CD4-positive, alpha-beta memory T cell (primary cell): ENCODE measurements at regions of chrX and their contacts with region 1.

Region 1: GRCh38 chrX:49922291-49923241 is at the start of gene CLCN5:
- DNase-seq: peak; percentile 91 to 96 (median 95)
- H3K4me3 ChIP-seq: peak within 1 kb of the TSS; percentile 42 to 65
- H3K4me3 Mint-ChIP-seq: peak within 1 kb of the TSS; percentile 76 to 86 (median 80)
- H3K27ac ChIP-seq: peak within 1 kb of the TSS; percentile 32
- H3K27ac Mint-ChIP-seq: peak within 1 kb of the TSS; percentile 59 to 81 (median 70)
- H3K4me1 ChIP-seq: peaks cover 4% of the 10 kb centered on the region
- H3K4me1 Mint-ChIP-seq: peaks cover 5 to 12% (median 5%) of the 10 kb centered on the region in 4 donors
- H3K27me3 ChIP-seq: no peaks in the 10 kb centered on the region
- H3K27me3 Mint-ChIP-seq: no peaks in the 10 kb centered on the region
- total RNA-seq, gene CLCN5: 1.8 to 2.4 TPM

Region 2: GRCh38 chrX:49673394-49673793 is 249.2 kb before region 1 on chrX:
- CTCF ChIA-PET with region 1: no interaction called
- POLR2A ChIA-PET with region 1: no interaction called
- intact Hi-C with region 1: no loop called
- DNase-seq: no peak
- H3K4me3 ChIP-seq: no peak overlapping the region
- H3K4me3 Mint-ChIP-seq: no peak overlapping the region
- H3K27ac ChIP-seq: no peak overlapping the region
- H3K27ac Mint-ChIP-seq: no peak overlapping the region
- H3K4me1 ChIP-seq: no peaks in the 10 kb centered on the region
- H3K4me1 Mint-ChIP-seq: no peaks in the 10 kb centered on the region
- H3K27me3 ChIP-seq: no peaks in the 10 kb centered on the region
- H3K27me3 Mint-ChIP-seq: peaks cover 3 to 6% of the 10 kb centered on the region in 2 donors

Region 3: DNA sequence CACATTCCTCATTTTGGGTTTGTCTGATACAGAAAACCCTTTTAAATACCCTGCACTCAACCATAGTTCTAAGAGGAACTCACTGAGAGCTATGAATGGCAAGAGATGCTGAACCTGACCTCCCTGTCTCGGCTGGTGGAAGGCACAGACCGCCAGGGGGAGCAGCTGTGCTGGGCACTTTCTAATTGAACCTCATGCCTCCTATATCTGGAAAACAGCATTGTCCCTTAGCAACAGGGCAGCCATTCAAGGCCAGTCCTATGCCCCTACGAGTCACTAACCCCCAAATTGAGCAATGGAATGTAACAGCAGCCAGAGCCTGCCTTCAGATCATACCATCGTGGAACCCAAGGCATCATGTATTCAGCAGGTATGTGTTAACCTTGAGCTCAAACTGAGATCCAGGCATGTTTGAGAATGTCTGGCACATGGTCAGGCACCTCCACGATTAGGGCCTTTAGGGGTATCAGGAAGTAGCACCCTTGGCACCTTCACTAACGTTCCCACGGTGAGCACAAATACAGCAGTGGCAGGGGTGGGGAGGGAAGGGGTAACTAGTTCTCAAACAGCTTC is 38.2 kb before region 1 on chrX:
- CTCF ChIA-PET with region 1: interaction called, 28 read pairs
- POLR2A ChIA-PET with region 1: interaction called, 9 read pairs
- intact Hi-C with region 1: loop called (anchors 1 kb)
- DNase-seq: peak; percentile 30 to 61 (median 41)
- H3K4me3 ChIP-seq: no peak overlapping the region
- H3K4me3 Mint-ChIP-seq: peak overlapping the region in 1 of 8 donors; percentile 36
- H3K27ac ChIP-seq: no peak overlapping the region
- H3K27ac Mint-ChIP-seq: peak overlapping the region in 2 of 7 donors; percentile 1 to 57
- H3K4me1 ChIP-seq: peaks cover 17% of the 10 kb centered on the region
- H3K4me1 Mint-ChIP-seq: peaks cover 13 to 34% (median 21%) of the 10 kb centered on the region in 4 donors
- H3K27me3 ChIP-seq: no peaks in the 10 kb centered on the region
- H3K27me3 Mint-ChIP-seq: no peaks in the 10 kb centered on the region

Region 4: DNA sequence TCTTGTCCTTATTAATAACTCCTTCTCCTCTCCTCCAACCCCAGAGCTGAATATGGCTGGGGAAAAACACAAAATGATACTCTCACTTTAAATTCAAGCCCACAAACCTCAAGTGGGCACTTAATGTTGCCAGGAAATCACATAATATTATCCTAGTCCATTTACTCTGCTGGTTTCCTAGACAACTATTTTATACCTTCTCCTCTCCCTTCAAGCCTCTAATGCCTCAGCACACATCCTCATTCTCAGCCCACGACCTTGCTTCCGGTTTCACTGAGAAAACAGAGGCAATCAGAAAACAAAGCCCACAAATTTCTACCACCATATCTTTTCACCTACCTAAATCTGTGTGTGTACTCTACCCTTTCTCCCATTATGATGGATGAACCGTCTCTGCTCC is 12.2 kb before region 1 on chrX:
- CTCF ChIA-PET with region 1: interaction called, 10 read pairs
- POLR2A ChIA-PET with region 1: no interaction called
- intact Hi-C with region 1: no loop called
- DNase-seq: peak in 2 of 5 donors; percentile 4 to 11
- H3K4me3 ChIP-seq: no peak overlapping the region
- H3K4me3 Mint-ChIP-seq: no peak overlapping the region
- H3K27ac ChIP-seq: no peak overlapping the region
- H3K27ac Mint-ChIP-seq: peak overlapping the region in 3 of 7 donors; percentile 9 to 47 (median 25)
- H3K4me1 ChIP-seq: no peaks in the 10 kb centered on the region
- H3K4me1 Mint-ChIP-seq: peaks cover 7 to 17% (median 8%) of the 10 kb centered on the region in 4 donors
- H3K27me3 ChIP-seq: no peaks in the 10 kb centered on the region
- H3K27me3 Mint-ChIP-seq: no peaks in the 10 kb centered on the region

Region 5: GRCh38 chrX:49951524-49952193 is 29.1 kb after region 1 on chrX:
- CTCF ChIA-PET with region 1: no interaction called
- POLR2A ChIA-PET with region 1: no interaction called
- intact Hi-C with region 1: no loop called
- DNase-seq: no peak
- H3K4me3 ChIP-seq: no peak overlapping the region
- H3K4me3 Mint-ChIP-seq: no peak overlapping the region
- H3K27ac ChIP-seq: no peak overlapping the region
- H3K27ac Mint-ChIP-seq: no peak overlapping the region
- H3K4me1 ChIP-seq: no peaks in the 10 kb centered on the region
- H3K4me1 Mint-ChIP-seq: no peaks in the 10 kb centered on the region
- H3K27me3 ChIP-seq: no peaks in the 10 kb centered on the region
- H3K27me3 Mint-ChIP-seq: no peaks in the 10 kb centered on the region

Region 6: DNA sequence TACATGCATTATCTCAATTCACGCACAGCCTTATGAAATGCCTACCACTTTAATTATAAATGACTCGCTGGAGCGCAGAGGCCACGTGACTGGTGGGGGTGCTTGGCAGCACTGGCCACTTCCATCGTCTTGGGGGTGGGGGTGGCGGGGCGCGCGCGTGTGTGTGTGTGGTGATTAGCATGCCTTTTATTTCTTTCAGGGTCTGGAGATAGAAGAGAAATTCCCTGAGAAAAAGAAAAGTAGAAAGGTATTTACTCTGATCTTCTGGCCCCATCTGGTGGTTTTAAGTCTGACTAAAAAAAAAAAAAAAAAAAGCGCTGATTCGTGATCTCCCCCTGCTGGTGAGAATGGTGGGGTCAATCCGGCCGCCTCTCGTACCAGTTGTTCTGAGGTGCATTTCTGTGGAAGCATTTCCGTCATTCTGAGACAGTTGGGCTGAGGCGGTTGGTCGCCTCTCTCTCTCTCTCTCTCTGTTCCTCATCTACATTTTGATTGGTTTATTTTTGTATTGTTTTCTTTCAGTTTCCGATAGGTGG is 281.9 kb after region 1 on chrX and contains the start of gene CCNB3:
- CTCF ChIA-PET with region 1: interaction called, 7 read pairs
- POLR2A ChIA-PET with region 1: interaction called, 3 read pairs
- intact Hi-C with region 1: loop called (anchors 1 kb)
- DNase-seq: peak; percentile 73 to 84 (median 82)
- H3K4me3 ChIP-seq: peak within 1 kb of the TSS in 1 of 2 donors; percentile 24
- H3K4me3 Mint-ChIP-seq: peak within 1 kb of the TSS; percentile 71 to 92 (median 84)
- H3K27ac ChIP-seq: peak within 1 kb of the TSS; percentile 21
- H3K27ac Mint-ChIP-seq: peak within 1 kb of the TSS; percentile 71 to 96 (median 85)
- H3K4me1 ChIP-seq: peaks cover 6% of the 10 kb centered on the region
- H3K4me1 Mint-ChIP-seq: peaks cover 5 to 20% (median 9%) of the 10 kb centered on the region in 4 donors
- H3K27me3 ChIP-seq: no peaks in the 10 kb centered on the region
- H3K27me3 Mint-ChIP-seq: no peaks in the 10 kb centered on the region
- total RNA-seq, gene CCNB3: 0.09 to 0.17 TPM